Gastrocnemius medialis (tissue), 4 donors: ENCODE measurements at regions of chr2 and their contacts with region 1.

Region 1: DNA sequence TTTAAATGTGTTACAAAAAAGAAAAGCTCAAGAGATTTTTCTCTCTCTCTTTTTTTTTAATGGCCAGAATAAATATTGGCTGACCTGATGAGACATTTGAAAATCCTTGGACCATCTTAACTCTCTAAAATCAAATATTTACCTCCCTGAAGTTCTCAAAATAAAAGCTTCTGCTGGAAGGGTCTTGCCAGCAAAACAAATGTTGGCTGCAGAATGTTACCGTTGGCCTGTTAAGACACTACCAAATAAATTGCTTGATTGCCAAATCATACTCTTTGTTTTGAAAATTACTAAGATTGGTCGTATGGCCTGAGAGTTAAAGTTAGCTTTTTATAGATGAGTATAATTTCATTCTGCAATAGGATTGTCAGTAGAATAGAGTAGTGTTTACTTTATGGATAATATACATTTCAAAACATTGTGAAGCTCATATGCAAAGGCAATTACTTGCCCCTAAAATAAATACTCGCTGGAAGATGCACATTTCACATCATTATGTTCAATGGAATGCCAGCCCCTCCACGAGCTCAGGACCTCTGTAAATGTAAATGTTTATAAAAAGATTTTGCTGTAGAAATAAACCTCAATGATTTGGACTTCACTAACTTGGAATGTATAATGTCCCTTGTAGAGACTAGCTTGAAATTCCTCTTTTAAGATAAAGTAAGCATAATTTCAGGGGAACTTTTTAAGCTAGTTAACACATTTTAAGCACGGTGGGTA is 193.4 kb downstream of the SOX11 start:
- DNase-seq: no peak
- ATAC-seq: no peak
- H3K4me3 ChIP-seq: no peak overlapping the region
- H3K27ac ChIP-seq: no peak overlapping the region
- H3K4me1 ChIP-seq: no peaks in the 10 kb centered on the region
- H3K27me3 ChIP-seq: no peaks in the 10 kb centered on the region
- CTCF ChIP-seq: no peak
- POLR2A ChIP-seq: no peak

Region 2: DNA sequence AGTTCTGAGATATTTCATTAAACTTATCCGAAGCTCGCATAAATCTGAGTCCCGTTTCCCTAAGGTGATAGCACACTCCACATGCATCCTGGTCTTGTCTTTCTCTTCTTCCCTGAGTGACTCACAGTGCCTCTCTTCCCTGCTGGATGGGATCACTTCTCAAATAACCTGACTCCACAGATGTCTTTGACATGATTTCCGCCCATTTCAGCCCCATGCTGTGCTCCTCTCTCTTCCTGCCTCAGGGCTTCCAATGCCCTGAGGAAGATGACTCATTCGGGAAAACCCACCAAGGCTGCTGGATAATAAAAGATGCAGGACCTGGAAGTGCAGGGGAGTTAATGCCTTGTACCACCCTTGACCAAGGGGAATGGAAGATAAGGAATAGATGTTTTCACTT is 635.1 kb before region 1 on chr2:
- in situ Hi-C with region 1: no loop called
- intact Hi-C with region 1: no loop called
- DNase-seq: no peak
- ATAC-seq: no peak
- H3K4me3 ChIP-seq: no peak overlapping the region
- H3K27ac ChIP-seq: no peak overlapping the region
- H3K4me1 ChIP-seq: no peaks in the 10 kb centered on the region
- H3K27me3 ChIP-seq: no peaks in the 10 kb centered on the region
- CTCF ChIP-seq: no peak
- POLR2A ChIP-seq: no peak

Region 3: DNA sequence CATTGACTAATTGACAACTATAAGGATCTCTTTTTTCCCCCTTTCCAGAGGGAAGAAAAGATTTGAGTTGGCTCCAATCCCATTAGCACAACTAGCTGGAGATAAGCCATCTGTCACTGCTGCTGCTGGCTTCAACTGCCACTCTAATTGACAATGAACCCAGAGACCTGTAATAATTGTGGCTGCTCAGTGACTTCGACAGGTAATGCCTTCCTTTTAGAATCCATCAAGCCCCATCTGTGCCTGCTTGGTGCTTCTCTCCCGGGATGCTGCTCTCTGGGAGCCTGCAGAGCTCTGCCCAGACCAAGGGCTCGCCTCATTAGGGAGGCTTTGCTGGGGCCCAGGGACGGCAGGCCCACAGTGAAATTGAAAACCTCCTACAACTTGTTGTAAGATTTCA is 570.1 kb before region 1 on chr2:
- in situ Hi-C with region 1: no loop called
- intact Hi-C with region 1: no loop called
- DNase-seq: no peak
- ATAC-seq: no peak
- H3K4me3 ChIP-seq: no peak overlapping the region
- H3K27ac ChIP-seq: no peak overlapping the region
- H3K4me1 ChIP-seq: no peaks in the 10 kb centered on the region
- H3K27me3 ChIP-seq: no peaks in the 10 kb centered on the region
- CTCF ChIP-seq: no peak
- POLR2A ChIP-seq: no peak

Region 4: DNA sequence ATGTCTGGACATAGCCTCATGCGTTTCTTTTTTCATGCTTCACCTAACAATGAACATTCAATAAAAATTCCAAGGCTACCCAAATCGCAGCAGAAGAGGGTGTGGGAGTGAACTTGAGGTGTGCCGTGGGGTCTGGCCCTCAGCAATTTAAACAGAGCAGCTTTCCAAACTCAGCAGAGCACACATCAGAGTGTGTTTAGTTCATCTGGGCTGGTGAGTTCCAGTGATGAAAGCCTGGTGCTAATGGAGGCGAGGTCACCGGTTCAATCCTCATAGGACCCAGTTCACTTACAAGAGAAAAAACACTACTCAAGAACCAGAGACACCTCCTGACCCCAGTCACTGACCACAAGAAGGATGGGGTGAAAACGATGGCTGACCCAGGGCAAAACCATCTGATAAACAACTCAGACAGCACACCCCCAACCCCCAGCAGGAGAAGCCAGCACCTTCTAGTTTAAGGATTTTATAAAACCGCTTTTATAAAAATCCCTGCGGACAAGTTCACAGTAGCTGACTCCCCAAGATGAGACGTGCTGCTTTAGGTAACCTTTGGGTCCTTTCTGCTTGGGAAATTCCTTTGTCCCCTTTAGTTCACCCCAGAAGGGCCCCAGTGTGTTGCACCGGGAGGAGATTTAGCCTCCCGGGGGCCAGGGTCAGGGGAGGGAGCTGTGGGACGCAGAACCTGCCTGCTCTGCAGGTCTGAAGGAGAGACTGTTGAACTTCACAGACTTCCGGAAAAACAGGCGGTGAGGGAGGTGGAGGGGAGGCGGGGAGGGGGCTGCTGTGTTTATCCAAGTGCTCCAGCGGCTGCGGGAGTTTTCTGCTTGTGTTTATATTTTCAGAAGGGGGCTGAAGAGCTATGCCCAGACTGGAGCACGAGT is 346.1 kb before region 1 on chr2:
- in situ Hi-C with region 1: no loop called
- intact Hi-C with region 1: no loop called
- DNase-seq: no peak
- ATAC-seq: no peak
- H3K4me3 ChIP-seq: no peak overlapping the region
- H3K27ac ChIP-seq: no peak overlapping the region
- H3K4me1 ChIP-seq: no peaks in the 10 kb centered on the region
- H3K27me3 ChIP-seq: no peaks in the 10 kb centered on the region
- CTCF ChIP-seq: no peak
- POLR2A ChIP-seq: no peak

Region 5: DNA sequence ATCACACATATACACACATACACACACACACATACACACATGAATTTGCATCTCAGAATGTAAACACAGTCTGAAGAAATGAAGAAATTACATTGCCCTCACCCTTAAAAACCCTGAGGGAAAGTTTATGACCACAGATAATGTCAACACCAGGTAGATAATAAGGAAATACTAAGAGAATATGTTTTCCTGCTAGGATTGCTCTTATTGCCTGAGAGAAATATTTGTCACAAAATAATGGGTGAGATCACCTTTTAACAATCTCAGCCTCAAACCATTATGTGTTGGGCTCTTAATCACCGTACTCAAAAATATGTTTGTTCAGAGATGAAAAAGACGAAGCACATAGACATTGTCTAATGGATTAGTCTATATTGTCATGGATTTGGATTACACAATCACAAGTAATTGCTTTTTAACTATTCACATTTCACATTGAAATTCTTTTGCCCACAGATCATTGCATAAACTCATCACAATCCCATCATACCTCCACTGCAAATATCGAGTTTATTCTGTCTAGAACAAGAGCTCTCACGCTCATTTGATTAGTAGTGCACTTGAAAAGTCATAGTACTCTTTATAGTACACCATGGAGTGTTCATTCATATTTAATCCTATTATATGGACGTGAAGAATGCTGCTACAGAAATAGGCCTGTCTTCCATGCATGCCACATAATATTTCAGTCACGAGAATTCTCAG is 291.5 kb before region 1 on chr2:
- in situ Hi-C with region 1: no loop called
- intact Hi-C with region 1: no loop called
- DNase-seq: no peak
- ATAC-seq: no peak
- H3K4me3 ChIP-seq: no peak overlapping the region
- H3K27ac ChIP-seq: no peak overlapping the region
- H3K4me1 ChIP-seq: no peaks in the 10 kb centered on the region
- H3K27me3 ChIP-seq: peaks cover 0 to 1% (median 0%) of the 10 kb centered on the region in 3 donors
- CTCF ChIP-seq: no peak
- POLR2A ChIP-seq: no peak

Region 6: DNA sequence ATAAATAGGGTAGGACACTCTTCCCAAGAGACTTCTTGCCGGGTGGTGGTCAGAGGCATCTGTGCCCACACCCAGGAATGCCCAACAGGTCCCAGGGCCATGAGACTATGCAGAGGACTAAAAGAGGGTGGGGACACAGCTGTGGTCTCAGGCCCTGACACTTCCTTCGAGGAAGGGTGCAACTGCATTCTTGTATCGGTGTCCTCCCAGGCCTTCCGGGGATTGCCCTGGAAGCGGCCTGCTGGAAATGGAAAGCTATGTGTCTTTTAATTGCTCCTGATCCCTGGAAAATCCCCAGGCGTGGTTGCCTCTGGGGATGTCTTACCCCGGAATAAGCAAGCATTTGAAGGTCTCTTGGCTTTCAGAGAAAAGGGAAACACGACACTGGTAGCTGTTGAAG is 16.7 kb before region 1 on chr2:
- in situ Hi-C with region 1: no loop called
- intact Hi-C with region 1: loop called (anchors 1 kb)
- DNase-seq: no peak
- ATAC-seq: no peak
- H3K4me3 ChIP-seq: no peak overlapping the region
- H3K27ac ChIP-seq: no peak overlapping the region
- H3K4me1 ChIP-seq: no peaks in the 10 kb centered on the region
- H3K27me3 ChIP-seq: no peaks in the 10 kb centered on the region
- CTCF ChIP-seq: no peak
- POLR2A ChIP-seq: no peak